ENCODE measurements at regions of chr11 and their contacts with region 1.

Region 1: GRCh38 chr11:76248210-76248609 is 41.9 kb upstream of the WNT11 start:
- DNase-seq: no peak
- H3K4me3 ChIP-seq: no peak overlapping the region
- H3K27ac ChIP-seq: no peak overlapping the region
- H3K4me1 ChIP-seq: no peaks in the 10 kb centered on the region
- H3K27me3 ChIP-seq: no peaks in the 10 kb centered on the region
- CTCF ChIP-seq: peak; percentile 25 to 29

Region 2: DNA sequence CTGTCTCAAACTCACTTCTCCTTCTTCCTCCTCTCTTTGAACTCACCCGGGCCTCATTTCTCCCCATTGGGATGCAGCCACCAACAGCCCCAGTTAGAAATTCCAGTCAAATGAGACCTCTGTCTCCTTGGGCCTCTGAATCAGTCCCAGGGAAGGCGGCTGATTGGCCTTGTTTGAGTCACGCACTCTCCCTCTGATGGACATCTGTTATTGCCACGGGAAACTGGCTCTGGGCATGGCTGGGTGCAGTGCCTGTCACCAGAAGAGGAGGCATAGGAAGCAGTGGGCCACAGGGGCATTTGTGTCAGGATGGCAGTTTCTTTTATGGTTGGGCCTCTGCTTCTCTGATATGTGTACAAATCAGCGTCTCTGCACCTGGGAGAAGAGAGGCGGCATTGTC is 32.3 kb before region 1 on chr11:
- CTCF ChIA-PET with region 1: no interaction called
- dilution Hi-C with region 1: no loop called
- in situ Hi-C with region 1: no loop called
- intact Hi-C with region 1: no loop called
- DNase-seq: peak; percentile 14
- H3K4me3 ChIP-seq: no peak overlapping the region
- H3K27ac ChIP-seq: no peak overlapping the region
- H3K4me1 ChIP-seq: no peaks in the 10 kb centered on the region
- H3K27me3 ChIP-seq: peaks cover 4% of the 10 kb centered on the region
- CTCF ChIP-seq: no peak

Region 3: GRCh38 chr11:76279646-76280045 is 31.4 kb after region 1 on chr11:
- CTCF ChIA-PET with region 1: no interaction called
- dilution Hi-C with region 1: loop called (anchors 5 kb)
- in situ Hi-C with region 1: no loop called
- intact Hi-C with region 1: no loop called
- DNase-seq: no peak
- H3K4me3 ChIP-seq: no peak overlapping the region
- H3K27ac ChIP-seq: no peak overlapping the region
- H3K4me1 ChIP-seq: no peaks in the 10 kb centered on the region
- H3K27me3 ChIP-seq: no peaks in the 10 kb centered on the region
- CTCF ChIP-seq: no peak